ENCODE measurements at regions of chr7 and their contacts with region 1.

Region 1: DNA sequence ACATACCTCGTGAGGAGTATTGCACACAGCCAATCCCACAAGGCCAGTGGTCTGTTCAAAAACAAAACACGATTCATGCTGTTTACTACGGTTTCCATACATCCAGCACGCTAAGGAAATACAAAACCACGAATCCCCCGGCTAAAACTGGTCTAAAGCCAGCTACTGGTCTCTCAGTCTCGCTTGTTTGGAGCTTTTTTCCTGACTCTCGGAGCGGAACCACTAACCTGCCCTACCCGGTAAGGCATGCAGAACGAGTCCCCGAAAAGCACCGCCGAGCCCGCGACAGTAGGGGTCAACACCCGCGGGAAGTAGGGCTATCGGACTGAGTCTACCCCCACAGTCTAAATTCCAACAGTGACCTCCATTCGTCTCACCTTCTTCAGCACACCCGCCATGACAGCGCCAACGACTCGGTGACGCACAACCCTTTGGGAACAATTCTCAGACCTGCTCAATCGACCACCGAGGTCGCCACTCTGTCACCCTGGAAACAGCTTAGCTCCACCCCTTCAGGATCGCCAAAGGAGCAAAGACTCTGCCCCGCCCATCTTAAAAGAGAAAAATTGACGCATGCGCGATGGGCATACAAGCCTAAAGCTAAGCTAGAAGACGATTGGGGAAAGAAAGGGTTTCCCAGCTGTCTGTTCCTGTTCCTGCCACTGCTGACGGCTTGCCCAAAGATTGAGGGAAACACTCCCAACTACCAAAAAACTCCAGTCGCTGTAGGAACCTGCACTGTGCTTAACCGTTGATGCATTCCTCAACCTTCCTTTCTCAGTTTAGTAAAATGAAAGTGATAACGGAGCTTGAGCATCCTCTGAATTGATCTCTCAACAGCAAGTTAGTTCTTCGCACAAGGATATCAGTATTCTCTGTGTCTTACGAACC is at the start of gene NDUFA5:
- DNase-seq: peak; percentile 98
- ATAC-seq: peak; percentile 98
- H3K4me3 ChIP-seq: peak within 1 kb of the TSS; percentile 94 to 100 (median 98)
- H3K27ac ChIP-seq: peak within 1 kb of the TSS; percentile 89
- H3K4me1 ChIP-seq: peaks cover 23% of the 10 kb centered on the region
- H3K27me3 ChIP-seq: peaks cover 0 to 6% of the 10 kb centered on the region in 2 experiments; a peak in 1 of 5 replicates
- CTCF ChIP-seq: no peak
- EP300 ChIP-seq: no peak
- POLR2A ChIP-seq: peak; percentile 85 to 86
- RAD21 ChIP-seq: no peak
- total RNA-seq, gene NDUFA5: 55.9 and 79.6 TPM in 2 replicates

Region 2: GRCh38 chr7:123051916-123052315 is 505.7 kb before region 1 on chr7:
- CTCF ChIA-PET with region 1: no interaction called
- POLR2A ChIA-PET with region 1: no interaction called
- in situ Hi-C with region 1: no loop called
- intact Hi-C with region 1: no loop called
- DNase-seq: no peak
- ATAC-seq: no peak
- H3K4me3 ChIP-seq: no peak overlapping the region
- H3K27ac ChIP-seq: no peak overlapping the region
- H3K4me1 ChIP-seq: no peaks in the 10 kb centered on the region
- H3K27me3 ChIP-seq: no peaks in the 10 kb centered on the region
- CTCF ChIP-seq: no peak
- EP300 ChIP-seq: no peak
- POLR2A ChIP-seq: no peak
- RAD21 ChIP-seq: no peak

Region 3: GRCh38 chr7:123534383-123535260 is 23.0 kb before region 1 on chr7 and contains the start of gene IQUB:
- CTCF ChIA-PET with region 1: no interaction called
- POLR2A ChIA-PET with region 1: interaction called, 7 read pairs
- in situ Hi-C with region 1: no loop called
- intact Hi-C with region 1: loop called (anchors 1 kb)
- DNase-seq: peak; percentile 92
- ATAC-seq: peak; percentile 91
- H3K4me3 ChIP-seq: peak within 1 kb of the TSS; percentile 67 to 83 (median 78)
- H3K27ac ChIP-seq: peak within 1 kb of the TSS; percentile 66
- H3K4me1 ChIP-seq: peaks cover 6% of the 10 kb centered on the region
- H3K27me3 ChIP-seq: peaks cover 0 to 10% of the 10 kb centered on the region in 2 experiments; a peak in 3 of 5 replicates
- CTCF ChIP-seq: no peak
- EP300 ChIP-seq: no peak
- POLR2A ChIP-seq: no peak
- RAD21 ChIP-seq: no peak
- total RNA-seq, gene IQUB: 0.07 and 0.31 TPM in 2 replicates

Region 4: DNA sequence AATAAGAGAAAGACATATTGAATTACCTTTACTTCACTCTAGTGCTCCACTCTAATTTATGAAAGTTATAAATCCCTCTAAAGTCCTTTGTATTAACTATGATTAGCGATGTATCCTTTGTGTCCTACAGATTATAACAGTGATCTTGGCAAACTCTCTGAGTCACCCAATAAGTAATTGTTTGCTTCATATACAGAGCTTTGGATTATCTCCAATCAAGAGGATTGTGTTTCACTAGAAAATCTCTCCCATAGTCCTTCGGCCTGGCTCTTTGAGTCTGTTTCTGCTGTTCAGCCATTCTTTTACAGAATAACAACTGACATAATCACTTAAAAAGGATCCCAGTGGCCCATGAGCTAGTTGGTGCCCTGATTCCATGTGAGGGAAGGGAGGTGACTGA is 107.5 kb after region 1 on chr7:
- CTCF ChIA-PET with region 1: no interaction called
- POLR2A ChIA-PET with region 1: no interaction called
- in situ Hi-C with region 1: no loop called
- intact Hi-C with region 1: no loop called
- DNase-seq: no peak
- ATAC-seq: no peak
- H3K4me3 ChIP-seq: no peak overlapping the region
- H3K27ac ChIP-seq: no peak overlapping the region
- H3K4me1 ChIP-seq: no peaks in the 10 kb centered on the region
- H3K27me3 ChIP-seq: no peaks in the 10 kb centered on the region; a peak in 1 of 5 replicates
- CTCF ChIP-seq: no peak
- EP300 ChIP-seq: no peak
- POLR2A ChIP-seq: no peak
- RAD21 ChIP-seq: no peak

Measured in HepG2 (cell line).